Activated T-helper 2 cell treated with anti-CD3 and anti-CD28 coated beads, Interferon-gamma antibody, Interleukin-2, Interleukin-4, amounts not matched to agents 10 μg/mL and 5 μg/mL and 100 μg/mL, durations not matched to agents 14 hours and 24 hours and 36 hours (primary cell): ENCODE measurements at regions of chr12 and their contacts with region 1.

Region 1: DNA sequence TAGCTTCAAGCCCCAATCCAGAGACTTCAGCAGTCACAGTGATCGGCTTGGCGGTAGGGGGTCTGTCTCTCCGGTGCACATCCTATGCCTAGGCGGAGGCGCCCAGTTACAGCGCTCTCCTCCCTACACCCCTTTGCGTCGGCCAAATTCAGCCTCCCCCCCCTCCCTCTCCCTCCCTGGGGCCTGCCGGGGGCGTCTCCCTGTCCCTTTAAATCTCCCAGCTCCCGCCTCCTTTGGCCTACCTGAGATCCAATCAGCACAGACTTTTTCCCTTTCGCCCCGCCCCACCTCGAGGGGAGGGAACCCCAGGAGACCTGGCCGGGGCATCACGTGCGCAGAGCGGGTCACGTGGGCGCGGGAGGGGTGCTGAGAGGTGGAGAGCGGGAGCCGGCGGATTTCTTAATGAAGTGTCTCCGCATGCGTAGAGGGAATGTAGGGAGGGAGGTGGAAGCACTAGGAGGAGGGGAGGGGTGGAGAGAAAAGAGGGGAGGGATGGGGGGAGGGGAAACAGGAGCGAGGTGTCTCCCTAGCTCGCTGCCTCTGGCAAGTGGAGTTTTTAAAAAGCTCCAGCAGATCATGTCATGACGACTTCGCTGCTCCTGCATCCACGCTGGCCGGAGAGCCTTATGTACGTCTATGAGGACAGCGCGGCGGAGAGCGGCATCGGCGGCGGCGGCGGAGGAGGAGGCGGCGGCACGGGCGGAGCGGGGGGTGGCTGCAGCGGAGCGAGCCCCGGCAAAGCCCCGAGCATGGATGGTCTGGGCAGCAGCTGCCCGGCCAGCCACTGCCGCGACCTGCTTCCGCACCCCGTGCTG is at the start of gene HOXC13:
- DNase-seq: no peak
- H3K4me3 Mint-ChIP-seq: no peak within 1 kb of the TSS
- H3K27ac Mint-ChIP-seq: no peak within 1 kb of the TSS
- H3K4me1 Mint-ChIP-seq: no peaks in the 10 kb centered on the region
- H3K27me3 Mint-ChIP-seq: peaks cover 90% of the 10 kb centered on the region
- total RNA-seq, gene HOXC13: not detected in 2 replicates

Region 2: GRCh38 chr12:53952871-53953734 is 14.6 kb after region 1 on chr12:
- intact Hi-C with region 1: loop called (anchors 1 kb)
- DNase-seq: no peak
- H3K4me3 Mint-ChIP-seq: no peak overlapping the region
- H3K27ac Mint-ChIP-seq: peak overlapping the region; percentile 53
- H3K4me1 Mint-ChIP-seq: peaks cover 3% of the 10 kb centered on the region
- H3K27me3 Mint-ChIP-seq: peaks cover 95% of the 10 kb centered on the region

Region 3: DNA sequence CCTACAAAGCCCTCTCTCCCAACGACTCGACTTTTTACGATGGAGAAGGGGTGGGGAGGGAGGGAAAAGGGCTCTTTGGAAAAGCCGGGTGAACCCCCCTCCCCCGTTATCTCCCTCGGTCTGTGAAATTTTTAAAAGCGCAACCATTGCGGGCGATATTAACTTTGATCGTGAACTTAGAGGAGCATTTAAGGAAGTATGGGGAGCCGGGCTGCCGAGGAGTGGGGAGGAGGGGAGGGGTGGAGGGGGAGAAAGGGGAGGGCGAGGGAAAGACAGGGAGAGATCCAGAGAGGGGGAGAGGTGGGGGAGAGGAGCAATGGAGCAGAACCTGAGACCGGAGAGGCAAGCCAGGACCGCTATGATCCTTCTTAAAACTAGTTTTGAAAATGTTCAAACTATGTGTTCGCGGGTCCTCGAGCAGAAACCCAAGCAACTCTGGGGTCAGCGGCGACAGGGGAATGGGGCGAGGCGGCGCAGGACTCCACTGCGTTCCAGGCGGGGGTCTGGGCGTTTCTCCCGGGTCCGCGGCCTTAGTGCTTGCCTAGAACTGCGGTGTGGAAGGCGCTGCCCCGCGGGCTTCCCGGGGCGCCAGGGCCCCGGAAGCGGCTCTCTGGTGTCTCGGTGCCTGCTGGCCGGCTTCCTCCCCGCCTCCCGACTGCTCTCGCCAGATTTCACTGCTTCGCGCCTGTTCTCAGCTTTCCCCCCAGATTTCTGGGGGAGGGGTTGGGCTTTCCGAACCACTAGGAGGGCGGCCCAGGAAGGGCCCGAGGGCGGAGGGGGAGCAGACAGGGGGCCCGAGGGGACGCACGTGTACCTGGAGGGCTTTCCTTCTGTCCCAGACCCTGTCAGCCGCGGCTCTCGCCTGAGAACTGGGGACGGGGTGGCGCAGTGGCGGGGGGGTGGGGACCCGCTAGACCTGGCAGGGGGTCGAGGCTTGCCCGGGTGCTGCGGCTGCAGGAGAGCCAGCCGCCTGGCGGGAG is 35.8 kb after region 1 on chr12 and contains the start of gene HOTAIR:
- intact Hi-C with region 1: loop called (anchors 5 kb)
- DNase-seq: no peak
- H3K4me3 Mint-ChIP-seq: no peak within 1 kb of the TSS
- H3K27ac Mint-ChIP-seq: peak within 1 kb of the TSS; percentile 50
- H3K4me1 Mint-ChIP-seq: peaks cover 6% of the 10 kb centered on the region
- H3K27me3 Mint-ChIP-seq: peaks cover 81% of the 10 kb centered on the region
- total RNA-seq, gene HOTAIR: not detected in 2 replicates

Region 4: DNA sequence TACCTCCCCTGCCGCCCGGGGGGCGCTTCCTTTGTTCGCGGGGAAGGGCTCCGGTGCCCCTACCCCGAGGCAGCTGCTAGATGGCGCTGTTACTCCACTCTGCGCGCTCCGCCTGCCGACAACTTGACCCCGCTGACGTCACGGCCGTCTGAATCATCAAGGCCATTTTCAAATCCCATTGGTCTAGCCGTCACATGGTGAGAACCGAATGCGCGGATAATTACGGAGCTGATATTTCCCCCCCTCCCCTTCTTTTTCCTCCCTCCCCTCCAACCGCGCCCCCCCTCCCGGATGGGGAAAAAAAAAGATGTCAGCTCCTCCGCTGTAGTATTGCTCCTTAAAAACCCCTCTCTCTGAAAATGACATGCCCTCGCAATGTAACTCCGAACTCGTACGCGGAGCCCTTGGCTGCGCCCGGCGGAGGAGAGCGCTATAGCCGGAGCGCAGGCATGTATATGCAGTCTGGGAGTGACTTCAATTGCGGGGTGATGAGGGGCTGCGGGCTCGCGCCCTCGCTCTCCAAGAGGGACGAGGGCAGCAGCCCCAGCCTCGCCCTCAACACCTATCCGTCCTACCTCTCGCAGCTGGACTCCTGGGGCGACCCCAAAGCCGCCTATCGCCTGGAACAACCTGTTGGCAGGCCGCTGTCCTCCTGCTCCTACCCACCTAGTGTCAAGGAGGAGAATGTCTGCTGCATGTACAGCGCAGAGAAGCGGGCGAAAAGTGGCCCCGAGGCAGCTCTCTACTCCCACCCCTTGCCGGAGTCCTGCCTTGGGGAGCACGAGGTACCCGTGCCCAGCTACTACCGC is 46.6 kb after region 1 on chr12 and contains the start of gene HOXC10:
- intact Hi-C with region 1: loop called (anchors 10 kb)
- DNase-seq: peak; percentile 69
- H3K4me3 Mint-ChIP-seq: peak within 1 kb of the TSS; percentile 7
- H3K27ac Mint-ChIP-seq: no peak within 1 kb of the TSS
- H3K4me1 Mint-ChIP-seq: peaks cover 20% of the 10 kb centered on the region
- H3K27me3 Mint-ChIP-seq: peaks cover 90% of the 10 kb centered on the region
- total RNA-seq, gene HOXC10: not detected in 2 replicates

Region 5: DNA sequence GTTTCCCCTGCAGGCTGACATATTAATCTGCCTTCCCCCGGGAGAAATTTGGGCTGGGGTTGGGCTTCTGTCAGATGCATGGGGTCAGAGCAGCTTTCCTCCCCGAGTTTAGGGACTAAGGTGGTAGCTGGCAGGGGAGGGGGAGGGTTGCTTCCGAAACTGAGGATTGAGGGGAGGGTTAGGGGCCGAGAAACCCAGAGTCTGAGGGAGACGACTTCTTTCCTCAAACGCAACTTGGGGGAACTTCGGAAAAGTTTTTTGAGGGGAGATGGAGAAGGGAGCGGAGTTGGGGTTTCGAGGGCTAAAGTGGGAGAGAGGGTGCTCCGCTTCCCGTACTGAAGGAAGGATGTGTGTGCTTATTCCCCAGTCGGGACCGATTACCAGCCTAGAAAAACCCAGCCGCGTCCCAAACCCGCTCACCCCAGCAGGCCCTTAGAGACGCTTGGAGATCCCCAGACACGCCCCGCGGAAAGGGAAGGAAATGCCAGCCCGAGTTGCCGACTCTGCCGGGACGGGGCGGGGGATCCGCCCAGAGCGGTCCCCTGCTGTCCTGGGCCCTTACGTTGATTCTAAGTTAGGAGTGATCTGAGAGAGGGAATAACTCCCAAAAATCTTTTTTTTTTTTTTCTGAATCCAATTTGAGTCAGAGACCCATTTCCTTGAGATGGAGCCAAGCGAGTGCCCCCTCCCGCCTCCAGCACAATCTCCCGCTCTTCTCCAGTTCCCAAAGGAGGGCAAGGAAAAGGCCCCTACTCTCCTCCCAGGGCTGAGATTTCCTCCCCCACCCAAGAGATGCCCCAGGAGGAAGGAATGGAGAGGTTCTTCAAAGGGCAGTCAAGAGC is 188.4 kb after region 1 on chr12:
- intact Hi-C with region 1: loop called (anchors 2 kb)
- DNase-seq: no peak
- H3K4me3 Mint-ChIP-seq: no peak overlapping the region
- H3K27ac Mint-ChIP-seq: no peak overlapping the region
- H3K4me1 Mint-ChIP-seq: no peaks in the 10 kb centered on the region
- H3K27me3 Mint-ChIP-seq: peaks cover 84% of the 10 kb centered on the region